Gastrocnemius medialis (tissue), 4 donors: ENCODE measurements at regions of chr9 and their contacts with region 1.

Region 1: DNA sequence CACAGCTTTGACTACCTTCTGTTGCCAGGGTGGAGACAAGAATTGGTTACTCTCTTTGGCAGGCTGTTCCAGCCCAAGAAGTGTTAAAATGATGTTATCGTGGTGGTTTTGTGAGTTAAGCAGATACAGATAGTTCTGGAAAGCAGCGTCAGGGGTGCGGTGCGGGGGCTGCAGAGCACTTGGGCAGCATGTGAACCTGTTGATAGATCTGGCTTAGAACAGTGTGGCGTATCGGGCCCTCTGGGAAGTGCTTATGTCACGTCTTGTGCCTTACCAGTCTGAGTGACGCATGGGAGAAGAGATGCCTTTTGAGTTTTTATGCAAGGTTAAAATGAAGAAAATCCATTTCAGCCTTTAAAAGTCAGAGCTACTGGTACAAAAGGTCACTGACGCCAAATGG is 152.5 kb downstream of the PRKACG start:
- DNase-seq: no peak
- ATAC-seq: no peak
- H3K4me3 ChIP-seq: no peak overlapping the region
- H3K27ac ChIP-seq: no peak overlapping the region
- H3K4me1 ChIP-seq: no peaks in the 10 kb centered on the region
- H3K27me3 ChIP-seq: no peaks in the 10 kb centered on the region
- CTCF ChIP-seq: no peak
- POLR2A ChIP-seq: no peak

Region 2: DNA sequence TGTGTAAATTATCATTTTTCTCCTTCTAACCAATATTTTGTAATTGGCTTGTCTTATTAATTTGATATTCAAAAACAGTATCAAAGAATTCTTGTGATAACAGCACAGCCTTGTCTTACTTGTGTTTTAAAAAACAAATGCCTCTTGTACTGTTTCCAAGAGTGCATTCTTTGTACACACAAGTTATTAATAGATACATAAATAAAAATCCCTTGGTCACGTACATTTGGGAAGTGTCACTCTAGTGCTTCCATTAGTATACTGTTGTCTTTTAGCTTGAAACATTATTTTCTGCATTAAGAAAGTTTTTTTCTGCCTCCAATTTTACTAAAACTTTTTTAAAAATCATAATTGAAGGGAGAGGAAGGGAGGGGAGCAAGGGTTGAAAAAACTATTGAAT is 23.2 kb before region 1 on chr9:
- in situ Hi-C with region 1: no loop called
- intact Hi-C with region 1: loop called (anchors 2 kb)
- DNase-seq: no peak
- ATAC-seq: no peak
- H3K4me3 ChIP-seq: no peak overlapping the region
- H3K27ac ChIP-seq: no peak overlapping the region
- H3K4me1 ChIP-seq: peaks cover 7 to 13% of the 10 kb centered on the region in 2 donors
- H3K27me3 ChIP-seq: no peaks in the 10 kb centered on the region
- CTCF ChIP-seq: no peak
- POLR2A ChIP-seq: no peak